Naive thymus-derived CD8-positive, alpha-beta T cell (primary cell): ENCODE measurements at regions of chr22 and their contacts with region 1.

Region 1: GRCh38 chr22:50507991-50508884 is at the start of gene NCAPH2:
- DNase-seq: peak in 8 of 10 donors; percentile 95 to 98 (median 97)
- ATAC-seq: peak; percentile 73 to 77
- H3K4me3 Mint-ChIP-seq: peak within 1 kb of the TSS; percentile 90 to 96 (median 94)
- H3K27ac Mint-ChIP-seq: peak within 1 kb of the TSS; percentile 85 to 100 (median 96)
- H3K4me1 Mint-ChIP-seq: peaks cover 2 to 25% (median 16%) of the 10 kb centered on the region in 4 donors
- H3K27me3 Mint-ChIP-seq: no peaks in the 10 kb centered on the region
- polyA plus RNA-seq, gene NCAPH2: 34.8 to 41.5 (median 40.1) TPM

Region 2: GRCh38 chr22:50146439-50147238 is 361.6 kb before region 1 on chr22:
- POLR2A ChIA-PET with region 1: no interaction called
- DNase-seq: no peak
- ATAC-seq: no peak
- H3K4me3 Mint-ChIP-seq: no peak overlapping the region
- H3K27ac Mint-ChIP-seq: peak overlapping the region in 3 of 10 donors; percentile 12 to 77 (median 60)
- H3K4me1 Mint-ChIP-seq: peaks cover 3 to 7% (median 5%) of the 10 kb centered on the region in 4 donors
- H3K27me3 Mint-ChIP-seq: peaks cover 0 to 4% (median 3%) of the 10 kb centered on the region in 5 donors

Region 3: GRCh38 chr22:50469377-50470305 is 38.6 kb before region 1 on chr22:
- POLR2A ChIA-PET with region 1: interaction called, 21 read pairs
- DNase-seq: peak; percentile 87 to 100 (median 96)
- ATAC-seq: peak; percentile 78 to 87
- H3K4me3 Mint-ChIP-seq: peak overlapping the region; percentile 75 to 98 (median 86)
- H3K27ac Mint-ChIP-seq: peak overlapping the region; percentile 88 to 98 (median 96)
- H3K4me1 Mint-ChIP-seq: peaks cover 40 to 86% (median 74%) of the 10 kb centered on the region in 4 donors
- H3K27me3 Mint-ChIP-seq: no peaks in the 10 kb centered on the region

Region 4: GRCh38 chr22:50530877-50531545 is 22.8 kb after region 1 on chr22:
- POLR2A ChIA-PET with region 1: interaction called, 128 read pairs
- DNase-seq: peak in 8 of 10 donors; percentile 47 to 76 (median 60)
- ATAC-seq: peak; percentile 28 to 55
- H3K4me3 Mint-ChIP-seq: peak overlapping the region; percentile 79 to 91 (median 88)
- H3K27ac Mint-ChIP-seq: peak overlapping the region; percentile 80 to 97 (median 91)
- H3K4me1 Mint-ChIP-seq: peaks cover 20 to 50% (median 34%) of the 10 kb centered on the region in 4 donors
- H3K27me3 Mint-ChIP-seq: peaks cover 0 to 11% (median 0%) of the 10 kb centered on the region in 5 donors

Region 5: GRCh38 chr22:50537765-50538164 is 29.5 kb after region 1 on chr22:
- POLR2A ChIA-PET with region 1: interaction called, 18 read pairs
- DNase-seq: no peak
- ATAC-seq: no peak
- H3K4me3 Mint-ChIP-seq: peak overlapping the region in 4 of 10 donors; percentile 11 to 65 (median 34)
- H3K27ac Mint-ChIP-seq: peak overlapping the region; percentile 63 to 100 (median 86)
- H3K4me1 Mint-ChIP-seq: peaks cover 10 to 70% (median 22%) of the 10 kb centered on the region in 4 donors
- H3K27me3 Mint-ChIP-seq: peaks cover 0 to 4% (median 0%) of the 10 kb centered on the region in 5 donors

Region 6: GRCh38 chr22:50544078-50544745 is 36.0 kb after region 1 on chr22:
- POLR2A ChIA-PET with region 1: interaction called, 26 read pairs
- DNase-seq: peak; percentile 65 to 84 (median 72)
- ATAC-seq: peak; percentile 53 to 58
- H3K4me3 Mint-ChIP-seq: peak overlapping the region; percentile 54 to 74 (median 66)
- H3K27ac Mint-ChIP-seq: peak overlapping the region in 9 of 10 donors; percentile 31 to 83 (median 73)
- H3K4me1 Mint-ChIP-seq: peaks cover 13 to 65% (median 35%) of the 10 kb centered on the region in 4 donors
- H3K27me3 Mint-ChIP-seq: no peaks in the 10 kb centered on the region

Region 7: DNA sequence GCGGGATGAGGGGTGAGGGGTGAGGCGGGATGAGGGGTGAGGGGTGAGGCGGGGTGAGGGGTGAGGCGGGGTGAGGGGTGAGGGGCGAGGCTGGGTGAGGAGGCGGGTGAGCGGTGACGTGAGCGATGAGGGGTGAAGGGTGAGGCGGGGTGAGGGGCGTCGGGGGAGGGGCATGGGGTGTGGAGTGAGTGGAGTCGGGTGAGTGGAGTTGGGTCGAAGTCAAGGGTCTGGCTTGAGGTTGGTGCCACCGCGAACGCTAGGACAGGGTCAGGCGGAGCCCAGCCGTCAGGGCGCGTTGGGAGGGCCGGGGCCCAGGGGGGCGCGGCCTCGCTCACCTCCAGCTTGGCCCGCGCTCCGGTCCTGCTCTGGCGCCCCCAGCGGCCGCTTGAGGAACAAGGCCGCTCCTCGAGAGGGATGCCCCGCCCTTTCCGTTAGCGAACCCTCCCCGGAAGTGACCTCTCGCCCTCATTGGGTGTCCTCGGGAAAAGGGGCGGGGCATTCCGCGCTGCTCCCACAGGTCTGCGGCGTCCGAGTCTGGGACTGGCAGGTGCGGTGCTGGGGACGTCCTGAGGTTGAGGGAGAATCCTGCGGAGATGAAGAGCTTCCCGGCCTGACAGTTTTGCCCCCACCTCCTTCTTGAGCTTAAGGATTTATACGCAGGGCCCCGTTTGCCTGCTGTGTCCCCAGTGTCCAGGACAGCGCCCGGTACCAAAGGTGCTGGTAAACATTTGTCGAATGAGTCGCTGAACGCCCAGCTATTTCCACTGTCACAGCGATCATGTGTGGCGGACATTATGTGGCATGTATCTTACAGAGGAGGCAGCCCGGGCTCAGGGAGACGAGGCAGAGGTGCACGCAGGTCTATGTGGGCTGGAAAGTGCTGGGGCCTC is 54.5 kb after region 1 on chr22 and contains the start of gene SYCE3:
- POLR2A ChIA-PET with region 1: interaction called, 11 read pairs
- DNase-seq: peak; percentile 93 to 99 (median 97)
- ATAC-seq: peak; percentile 95 to 98
- H3K4me3 Mint-ChIP-seq: peak within 1 kb of the TSS; percentile 91 to 98 (median 94)
- H3K27ac Mint-ChIP-seq: peak within 1 kb of the TSS; percentile 72 to 96 (median 91)
- H3K4me1 Mint-ChIP-seq: peaks cover 12 to 23% (median 17%) of the 10 kb centered on the region in 4 donors
- H3K27me3 Mint-ChIP-seq: no peaks in the 10 kb centered on the region
- polyA plus RNA-seq, gene SYCE3: not detected

Region 8: DNA sequence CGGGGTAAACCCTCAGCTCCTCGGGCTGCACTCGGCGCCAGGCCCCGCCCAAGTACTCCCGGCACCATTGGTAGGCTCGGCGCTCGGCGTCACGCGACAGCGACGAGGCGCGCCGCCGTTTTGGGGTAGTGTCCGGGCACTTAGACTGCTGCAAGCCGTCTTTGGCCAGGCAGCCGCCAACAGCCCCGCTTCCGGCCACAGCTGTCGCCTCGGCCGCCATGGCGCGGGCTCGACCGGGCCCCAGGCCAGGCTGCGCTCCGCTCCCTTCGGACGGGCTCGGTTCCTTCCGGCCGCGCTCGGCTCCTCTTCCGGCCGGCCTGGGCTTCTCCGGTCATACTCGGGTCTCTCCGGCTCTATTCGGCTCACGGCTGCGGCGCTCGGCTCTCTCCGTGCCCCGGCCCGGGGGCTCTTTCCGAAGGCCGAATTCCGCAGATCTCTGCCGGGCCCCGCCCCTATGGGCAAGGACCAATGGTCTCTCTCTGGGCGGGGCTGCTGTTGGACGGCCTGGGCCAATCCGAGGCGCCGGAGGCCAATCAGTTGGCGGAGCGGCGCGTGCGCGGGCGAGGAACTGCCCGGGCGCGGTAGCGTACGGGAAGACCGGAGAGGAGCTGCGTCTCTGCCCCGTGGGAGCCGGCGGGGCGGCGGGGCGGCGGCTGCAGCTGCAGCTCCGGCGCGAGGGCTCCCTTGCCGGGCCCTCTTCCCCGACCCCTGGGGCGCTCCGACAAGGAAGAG is 74.5 kb after region 1 on chr22 and contains the start of gene CHKB:
- POLR2A ChIA-PET with region 1: interaction called, 21 read pairs
- DNase-seq: peak; percentile 96 to 99 (median 98)
- ATAC-seq: peak; percentile 92 to 94
- H3K4me3 Mint-ChIP-seq: peak within 1 kb of the TSS; percentile 84 to 98 (median 94)
- H3K27ac Mint-ChIP-seq: peak within 1 kb of the TSS; percentile 88 to 98 (median 96)
- H3K4me1 Mint-ChIP-seq: peaks cover 9 to 39% (median 31%) of the 10 kb centered on the region in 4 donors
- H3K27me3 Mint-ChIP-seq: no peaks in the 10 kb centered on the region
- polyA plus RNA-seq, gene CHKB: 23.0 to 26.9 (median 25.1) TPM